ENCODE measurements at regions of chr17 and their contacts with region 1.

Region 1: DNA sequence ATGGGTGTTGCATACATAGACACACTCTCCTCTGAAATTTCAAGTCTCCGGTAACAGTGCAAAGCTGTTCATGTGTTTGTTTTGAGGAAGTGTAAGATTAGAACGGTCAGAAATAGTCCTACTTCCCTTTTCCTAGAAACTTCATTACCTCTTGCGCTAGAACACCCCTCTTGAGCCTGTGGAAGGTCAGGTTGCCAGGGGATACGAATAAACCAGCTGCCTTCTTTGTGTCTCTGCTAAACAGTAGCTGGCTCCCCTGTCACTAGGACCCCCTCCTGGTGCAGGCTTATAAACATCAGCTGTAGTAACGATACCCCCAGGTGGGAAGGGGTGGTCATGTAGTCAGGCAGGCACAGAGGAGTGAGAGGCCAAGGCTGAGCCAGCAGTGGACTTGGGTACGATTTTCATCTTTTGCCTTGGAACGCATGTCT is 113.4 kb upstream of the RCVRN start:
- DNase-seq: peak; percentile 87 to 94 (median 92)
- H3K4me3 ChIP-seq: peak overlapping the region in 2 of 3 experiments; percentile 28 to 53
- H3K4me3 Mint-ChIP-seq: peak overlapping the region; percentile 52 to 77
- H3K27ac ChIP-seq: peak overlapping the region; percentile 93 to 98
- H3K27ac Mint-ChIP-seq: peak overlapping the region; percentile 96 to 99 (median 98)
- H3K4me1 ChIP-seq: peaks cover 96 to 99% of the 10 kb centered on the region in 2 donors
- H3K4me1 Mint-ChIP-seq: peaks cover 91% of the 10 kb centered on the region
- H3K27me3 ChIP-seq: no peaks in the 10 kb centered on the region
- H3K27me3 Mint-ChIP-seq: peaks cover 0 to 2% (median 0%) of the 10 kb centered on the region in 3 donors
- CTCF ChIP-seq: no peak

Region 2: GRCh38 chr17:10033959-10034358 is 15.5 kb after region 1 on chr17:
- intact Hi-C with region 1: loop called in 1 of 2 experiments (anchors 2 kb)
- DNase-seq: peak; percentile 91 to 97 (median 95)
- H3K4me3 ChIP-seq: peak overlapping the region; percentile 17 to 68 (median 18)
- H3K4me3 Mint-ChIP-seq: peak overlapping the region; percentile 74 to 93
- H3K27ac ChIP-seq: peak overlapping the region; percentile 91 to 94
- H3K27ac Mint-ChIP-seq: peak overlapping the region; percentile 96 to 99 (median 97)
- H3K4me1 ChIP-seq: peaks cover 96 to 98% of the 10 kb centered on the region in 2 donors
- H3K4me1 Mint-ChIP-seq: peaks cover 97% of the 10 kb centered on the region
- H3K27me3 ChIP-seq: no peaks in the 10 kb centered on the region
- H3K27me3 Mint-ChIP-seq: no peaks in the 10 kb centered on the region
- CTCF ChIP-seq: no peak

Region 3: DNA sequence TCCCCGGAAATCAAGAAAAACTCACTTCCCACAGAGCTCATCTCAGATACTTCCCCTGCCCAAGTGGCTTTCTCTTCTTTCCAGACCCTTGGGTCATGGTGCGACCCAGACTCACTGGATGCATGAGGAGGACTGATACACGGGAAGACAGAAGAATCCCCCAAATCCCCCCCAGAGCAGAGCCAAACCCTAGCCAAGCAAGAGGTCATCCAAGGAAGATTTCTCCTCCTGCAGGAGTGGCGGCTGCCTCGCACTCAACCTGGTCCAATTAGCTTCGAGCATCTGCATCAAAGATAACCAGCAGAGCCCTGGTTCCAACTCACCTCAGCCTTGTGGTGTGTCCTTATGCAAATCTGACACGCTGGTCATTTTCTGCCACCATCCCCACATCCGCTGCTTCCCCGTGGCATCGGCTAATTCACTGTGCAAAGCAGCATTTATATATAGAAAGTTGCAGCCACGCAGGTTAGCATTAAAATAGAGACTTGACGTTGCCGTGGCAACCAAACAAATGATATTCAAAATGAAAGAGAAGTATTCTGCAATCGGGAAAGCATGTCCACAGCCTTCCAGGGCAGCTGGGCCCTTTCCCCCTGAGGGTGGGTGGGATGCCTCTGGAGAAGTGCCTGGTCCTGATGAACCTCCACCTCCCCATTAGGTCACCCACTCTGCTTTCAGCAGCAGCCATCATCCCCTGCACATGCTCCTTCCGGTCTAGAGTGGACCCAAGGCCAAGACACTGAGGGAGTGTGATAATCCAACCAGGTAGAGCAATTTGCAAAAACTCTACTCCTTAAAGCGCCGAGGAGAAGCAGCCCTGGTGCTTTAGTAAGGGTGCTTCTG is 41.1 kb after region 1 on chr17:
- intact Hi-C with region 1: loop called (anchors 5 kb)
- DNase-seq: peak; percentile 60 to 70 (median 62)
- H3K4me3 ChIP-seq: peak overlapping the region in 1 of 3 experiments; percentile 14
- H3K4me3 Mint-ChIP-seq: peak overlapping the region in 1 of 2 donors; percentile 48
- H3K27ac ChIP-seq: peak overlapping the region in 1 of 2 donors; percentile 59
- H3K27ac Mint-ChIP-seq: peak overlapping the region; percentile 46 to 99 (median 92)
- H3K4me1 ChIP-seq: peaks cover 55 to 60% of the 10 kb centered on the region in 2 donors
- H3K4me1 Mint-ChIP-seq: peaks cover 64% of the 10 kb centered on the region
- H3K27me3 ChIP-seq: no peaks in the 10 kb centered on the region
- H3K27me3 Mint-ChIP-seq: peaks cover 0 to 13% (median 3%) of the 10 kb centered on the region in 3 donors
- CTCF ChIP-seq: no peak

Region 4: GRCh38 chr17:10115071-10115539 is 96.6 kb after region 1 on chr17:
- intact Hi-C with region 1: loop called in 1 of 2 experiments (anchors 10 kb)
- DNase-seq: peak; percentile 94 to 98 (median 96)
- H3K4me3 ChIP-seq: peak overlapping the region; percentile 1 to 62 (median 27)
- H3K4me3 Mint-ChIP-seq: peak overlapping the region; percentile 75 to 89
- H3K27ac ChIP-seq: peak overlapping the region; percentile 98 to 99
- H3K27ac Mint-ChIP-seq: peak overlapping the region; percentile 99 to 100 (median 100)
- H3K4me1 ChIP-seq: peaks cover 74 to 82% of the 10 kb centered on the region in 2 donors
- H3K4me1 Mint-ChIP-seq: peaks cover 85% of the 10 kb centered on the region
- H3K27me3 ChIP-seq: no peaks in the 10 kb centered on the region
- H3K27me3 Mint-ChIP-seq: peaks cover 0 to 9% (median 2%) of the 10 kb centered on the region in 3 donors
- CTCF ChIP-seq: no peak

Region 5: DNA sequence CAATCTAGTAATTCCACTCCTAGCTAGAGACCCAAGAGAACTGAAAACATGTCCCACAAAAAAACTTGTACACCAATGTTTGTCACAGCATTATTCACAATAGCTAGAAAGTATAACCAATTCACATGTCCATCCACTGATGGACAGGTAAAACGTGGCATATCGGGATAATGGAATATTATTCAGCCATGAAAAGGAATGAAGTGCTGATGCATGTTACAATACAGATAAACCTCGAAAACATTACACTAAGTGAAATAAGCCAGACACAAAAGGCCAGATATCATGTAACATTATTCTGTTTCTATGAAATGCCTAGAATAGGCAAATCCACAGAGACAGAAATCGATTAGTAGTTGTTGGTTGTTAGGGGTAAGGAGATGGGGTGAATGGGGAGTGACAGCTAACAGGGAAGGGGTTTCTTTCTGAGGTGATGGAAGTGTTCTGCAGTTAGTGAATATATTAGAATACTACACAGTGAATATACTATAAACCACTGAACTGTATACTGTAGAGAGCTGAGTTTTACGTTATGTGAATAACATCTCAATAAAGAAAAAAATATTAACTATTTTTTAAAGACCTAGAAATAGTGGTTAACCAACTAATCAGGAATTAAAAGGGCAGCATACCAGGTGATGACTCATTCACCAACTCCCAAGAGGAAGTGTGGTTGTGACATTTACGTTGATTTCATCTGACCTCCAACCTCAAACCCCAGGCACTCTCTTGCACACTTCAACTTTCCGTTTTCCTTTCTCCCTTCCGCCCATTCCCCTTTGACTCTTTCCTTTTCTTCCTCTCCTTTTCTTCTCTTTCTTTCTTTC is 131.3 kb after region 1 on chr17:
- intact Hi-C with region 1: loop called in 1 of 2 experiments (anchors 5 kb)
- DNase-seq: peak; percentile 86 to 96 (median 95)
- H3K4me3 ChIP-seq: peak overlapping the region in 1 of 3 experiments; percentile 47
- H3K4me3 Mint-ChIP-seq: peak overlapping the region; percentile 21 to 68
- H3K27ac ChIP-seq: peak overlapping the region; percentile 95 to 97
- H3K27ac Mint-ChIP-seq: peak overlapping the region; percentile 95 to 100 (median 98)
- H3K4me1 ChIP-seq: peaks cover 70 to 90% of the 10 kb centered on the region in 2 donors
- H3K4me1 Mint-ChIP-seq: peaks cover 75% of the 10 kb centered on the region
- H3K27me3 ChIP-seq: no peaks in the 10 kb centered on the region
- H3K27me3 Mint-ChIP-seq: peaks cover 0 to 3% (median 0%) of the 10 kb centered on the region in 3 donors
- CTCF ChIP-seq: no peak

Region 6: DNA sequence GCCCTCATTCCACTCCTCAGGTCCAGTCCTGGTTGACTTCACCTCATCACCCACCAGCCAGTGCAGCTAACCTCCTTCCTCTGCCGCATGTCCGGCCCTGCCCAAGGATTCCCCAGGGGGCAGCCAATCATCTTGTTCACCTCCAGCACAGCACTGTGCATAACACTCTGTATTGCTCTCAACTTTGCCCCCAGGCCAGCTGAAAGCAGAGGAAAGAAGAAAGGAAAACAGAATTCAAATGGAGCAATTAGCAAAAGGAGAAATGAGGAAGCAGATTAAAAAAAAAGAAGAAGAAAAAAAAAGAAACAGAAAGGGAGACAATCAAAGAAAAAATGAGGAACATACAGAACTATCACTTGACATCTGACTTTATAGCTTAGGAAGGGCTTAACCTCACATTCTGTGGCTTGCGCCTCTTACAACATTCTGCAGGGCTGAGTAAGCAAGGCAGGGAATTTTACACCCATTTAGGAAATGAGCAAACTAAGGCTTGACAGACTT is 153.8 kb after region 1 on chr17:
- intact Hi-C with region 1: loop called in 1 of 2 experiments (anchors 5 kb)
- DNase-seq: peak; percentile 85 to 96 (median 96)
- H3K4me3 ChIP-seq: peak overlapping the region in 1 of 3 experiments; percentile 65
- H3K4me3 Mint-ChIP-seq: peak overlapping the region; percentile 76 to 89
- H3K27ac ChIP-seq: peak overlapping the region; percentile 89 to 92
- H3K27ac Mint-ChIP-seq: peak overlapping the region; percentile 96 to 100 (median 99)
- H3K4me1 ChIP-seq: peaks cover 55 to 71% of the 10 kb centered on the region in 2 donors
- H3K4me1 Mint-ChIP-seq: peaks cover 86% of the 10 kb centered on the region
- H3K27me3 ChIP-seq: no peaks in the 10 kb centered on the region
- H3K27me3 Mint-ChIP-seq: peaks cover 0 to 4% (median 0%) of the 10 kb centered on the region in 3 donors
- CTCF ChIP-seq: no peak

Measured in CD14-positive monocyte (primary cell).